ENCODE measurements at regions of chr1 and their contacts with region 1.

Region 1: DNA sequence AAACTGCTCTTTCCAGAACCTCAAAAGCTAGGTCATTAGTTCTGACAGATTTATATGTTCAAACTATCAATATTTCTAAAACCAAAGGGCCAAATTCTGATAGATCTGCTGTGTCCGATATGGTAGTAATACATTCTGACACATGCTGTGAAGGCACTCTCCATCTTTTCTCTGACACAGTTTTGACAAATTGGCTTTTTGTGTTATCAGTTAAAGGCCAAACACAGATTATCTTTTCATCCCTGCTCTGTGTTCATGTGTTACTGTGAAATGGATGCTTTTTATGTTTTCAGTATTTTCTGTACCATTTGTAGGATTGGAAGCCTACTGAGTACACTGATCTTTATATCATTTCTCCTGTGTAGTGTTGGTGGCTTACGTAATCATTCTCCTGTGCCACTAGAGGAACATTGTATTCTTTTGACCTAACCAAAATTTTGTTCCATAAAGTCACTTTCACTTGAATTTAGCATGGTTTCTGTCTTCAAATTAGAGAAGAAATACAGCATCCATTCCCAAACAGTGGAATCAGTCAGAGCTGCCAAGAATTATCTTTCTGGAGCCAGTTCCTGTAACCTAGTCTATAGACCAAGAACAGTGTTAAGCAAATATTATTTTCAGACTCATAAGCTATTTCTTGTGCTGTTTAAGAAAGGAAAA is 137.2 kb downstream of the ADGRL2 start:
- DNase-seq: no peak
- ATAC-seq: peak in 1 of 4 donors; percentile 30
- H3K4me3 ChIP-seq: no peak overlapping the region
- H3K27ac ChIP-seq: no peak overlapping the region
- H3K4me1 ChIP-seq: no peaks in the 10 kb centered on the region
- H3K27me3 ChIP-seq: no peaks in the 10 kb centered on the region
- CTCF ChIP-seq: no peak
- POLR2A ChIP-seq: no peak

Region 2: GRCh38 chr1:81978945-81979344 is 41.0 kb after region 1 on chr1:
- intact Hi-C with region 1: loop called in 1 of 2 experiments (anchors 5 kb)
- DNase-seq: no peak
- ATAC-seq: no peak
- H3K4me3 ChIP-seq: no peak overlapping the region
- H3K27ac ChIP-seq: no peak overlapping the region
- H3K4me1 ChIP-seq: peaks cover 0 to 15% (median 0%) of the 10 kb centered on the region in 4 donors
- H3K27me3 ChIP-seq: no peaks in the 10 kb centered on the region
- CTCF ChIP-seq: no peak
- POLR2A ChIP-seq: no peak

Region 3: DNA sequence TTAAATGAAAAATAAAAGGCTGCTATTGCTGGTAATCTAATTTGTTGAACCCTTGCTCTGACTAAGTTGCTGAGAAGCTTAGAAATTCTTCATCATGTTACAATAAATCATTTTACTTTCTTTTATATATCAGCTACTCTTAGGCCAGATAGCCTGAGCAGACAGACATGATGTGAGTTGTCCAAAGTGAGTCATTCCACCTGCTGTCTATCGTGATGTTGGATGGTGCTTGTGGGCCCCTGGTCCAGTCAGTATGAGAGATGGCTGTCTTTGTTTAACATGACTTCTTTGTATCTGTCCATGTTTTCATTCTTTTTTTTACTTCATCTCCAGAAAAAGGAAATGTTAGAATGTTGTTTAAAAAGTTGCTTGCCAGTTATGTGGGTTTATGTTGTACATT is 51.6 kb after region 1 on chr1:
- intact Hi-C with region 1: no loop called
- DNase-seq: no peak
- ATAC-seq: no peak
- H3K4me3 ChIP-seq: no peak overlapping the region
- H3K27ac ChIP-seq: no peak overlapping the region
- H3K4me1 ChIP-seq: no peaks in the 10 kb centered on the region
- H3K27me3 ChIP-seq: no peaks in the 10 kb centered on the region
- CTCF ChIP-seq: no peak
- POLR2A ChIP-seq: no peak